ENCODE measurements at regions of chr2 and their contacts with region 1.

Region 1: DNA sequence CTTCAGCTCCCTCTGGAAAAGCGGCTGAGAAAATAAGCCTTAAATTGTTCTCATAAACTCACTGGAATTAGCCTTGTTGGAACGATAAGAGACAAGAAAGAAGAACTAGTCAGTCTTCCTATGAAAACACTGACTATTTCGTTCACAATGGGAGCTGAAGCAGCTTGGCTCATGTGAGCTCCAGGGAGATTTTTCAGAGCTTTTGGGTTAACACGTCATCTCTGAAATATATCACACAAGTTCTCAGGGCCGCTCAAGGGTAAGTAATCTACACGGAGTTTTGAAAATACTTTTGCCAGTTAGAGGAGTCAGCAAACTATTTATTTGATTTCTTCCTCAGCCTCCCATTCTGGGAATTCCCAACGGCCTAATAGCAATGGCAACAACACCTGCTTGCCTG is 316.2 kb upstream of the MGAT5 start:
- DNase-seq: peak; percentile 46
- ATAC-seq: peak; percentile 44
- H3K4me3 ChIP-seq: no peak overlapping the region
- H3K27ac ChIP-seq: no peak overlapping the region
- H3K4me1 ChIP-seq: peaks cover 6% of the 10 kb centered on the region
- H3K27me3 ChIP-seq: no peaks in the 10 kb centered on the region
- CTCF ChIP-seq: no peak
- POLR2A ChIP-seq: no peak
- RAD21 ChIP-seq: no peak

Region 2: GRCh38 chr2:133919285-133919684 is 18.4 kb before region 1 on chr2:
- CTCF ChIA-PET with region 1: no interaction called
- POLR2A ChIA-PET with region 1: no interaction called
- dilution Hi-C with region 1: no loop called
- in situ Hi-C with region 1: no loop called
- intact Hi-C with region 1: loop called (anchors 2 kb)
- DNase-seq: peak; percentile 31
- ATAC-seq: peak; percentile 92
- H3K4me3 ChIP-seq: no peak overlapping the region
- H3K27ac ChIP-seq: no peak overlapping the region
- H3K4me1 ChIP-seq: peaks cover 4% of the 10 kb centered on the region
- H3K27me3 ChIP-seq: no peaks in the 10 kb centered on the region; the same call in 1 of the 2 replicates
- CTCF ChIP-seq: no peak
- POLR2A ChIP-seq: no peak
- RAD21 ChIP-seq: no peak

Region 3: GRCh38 chr2:133953524-133953923 is 15.9 kb after region 1 on chr2:
- CTCF ChIA-PET with region 1: no interaction called
- POLR2A ChIA-PET with region 1: no interaction called
- dilution Hi-C with region 1: no loop called
- in situ Hi-C with region 1: no loop called
- intact Hi-C with region 1: no loop called
- DNase-seq: no peak
- ATAC-seq: no peak
- H3K4me3 ChIP-seq: no peak overlapping the region
- H3K27ac ChIP-seq: no peak overlapping the region
- H3K4me1 ChIP-seq: no peaks in the 10 kb centered on the region
- H3K27me3 ChIP-seq: peaks cover 7% of the 10 kb centered on the region; the same call in 1 of the 2 replicates
- CTCF ChIP-seq: no peak
- POLR2A ChIP-seq: no peak
- RAD21 ChIP-seq: no peak

Region 4: GRCh38 chr2:134014196-134014960 is 76.7 kb after region 1 on chr2:
- CTCF ChIA-PET with region 1: no interaction called
- POLR2A ChIA-PET with region 1: no interaction called
- dilution Hi-C with region 1: no loop called
- in situ Hi-C with region 1: no loop called
- intact Hi-C with region 1: loop called (anchors 5 kb)
- DNase-seq: peak; percentile 93
- ATAC-seq: peak; percentile 66
- H3K4me3 ChIP-seq: no peak overlapping the region
- H3K27ac ChIP-seq: peak overlapping the region; percentile 99
- H3K4me1 ChIP-seq: peaks cover 30% of the 10 kb centered on the region
- H3K27me3 ChIP-seq: no peaks in the 10 kb centered on the region
- CTCF ChIP-seq: no peak
- POLR2A ChIP-seq: no peak
- RAD21 ChIP-seq: no peak

Measured in IMR-90 (cell line).